Left cardiac atrium (tissue), 4 donors: ENCODE measurements at regions of chr16 and their contacts with region 1.

Region 1: DNA sequence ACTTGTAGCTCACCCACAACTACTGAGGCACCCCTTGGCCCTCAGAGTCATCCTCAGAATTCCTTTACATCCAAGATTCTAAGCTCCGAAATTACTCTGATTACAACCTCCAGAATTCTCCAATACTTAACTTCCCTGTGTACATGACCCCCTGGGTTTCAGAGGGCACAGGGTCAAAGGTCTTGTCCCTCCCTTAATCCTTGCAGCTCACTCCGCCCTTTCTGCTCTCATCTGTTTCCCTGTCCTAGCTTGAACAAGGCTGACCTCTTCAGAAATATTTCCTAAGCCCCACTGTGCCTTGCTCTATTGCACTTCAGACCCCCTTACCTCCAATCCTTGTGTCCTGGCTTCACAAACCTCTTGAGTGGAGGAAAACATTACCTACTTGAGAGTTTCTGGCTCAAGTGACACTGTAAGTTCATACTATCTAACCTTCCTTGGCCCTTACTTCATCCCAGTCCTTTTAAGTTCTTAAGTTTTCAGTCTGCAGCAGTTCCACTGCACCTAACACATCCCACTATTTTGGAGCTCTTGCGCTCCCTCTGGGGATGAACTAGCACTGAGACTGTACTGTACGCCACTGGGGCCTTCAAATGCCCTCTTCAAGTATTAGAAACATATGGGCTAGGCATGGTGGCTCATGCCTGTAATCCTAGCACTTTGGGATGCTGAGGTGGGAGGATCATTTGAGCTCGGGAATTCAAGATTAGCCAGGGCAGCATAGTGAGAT is 6.2 kb downstream of the N4BP1 start:
- DNase-seq: no peak
- ATAC-seq: no peak

Region 2: DNA sequence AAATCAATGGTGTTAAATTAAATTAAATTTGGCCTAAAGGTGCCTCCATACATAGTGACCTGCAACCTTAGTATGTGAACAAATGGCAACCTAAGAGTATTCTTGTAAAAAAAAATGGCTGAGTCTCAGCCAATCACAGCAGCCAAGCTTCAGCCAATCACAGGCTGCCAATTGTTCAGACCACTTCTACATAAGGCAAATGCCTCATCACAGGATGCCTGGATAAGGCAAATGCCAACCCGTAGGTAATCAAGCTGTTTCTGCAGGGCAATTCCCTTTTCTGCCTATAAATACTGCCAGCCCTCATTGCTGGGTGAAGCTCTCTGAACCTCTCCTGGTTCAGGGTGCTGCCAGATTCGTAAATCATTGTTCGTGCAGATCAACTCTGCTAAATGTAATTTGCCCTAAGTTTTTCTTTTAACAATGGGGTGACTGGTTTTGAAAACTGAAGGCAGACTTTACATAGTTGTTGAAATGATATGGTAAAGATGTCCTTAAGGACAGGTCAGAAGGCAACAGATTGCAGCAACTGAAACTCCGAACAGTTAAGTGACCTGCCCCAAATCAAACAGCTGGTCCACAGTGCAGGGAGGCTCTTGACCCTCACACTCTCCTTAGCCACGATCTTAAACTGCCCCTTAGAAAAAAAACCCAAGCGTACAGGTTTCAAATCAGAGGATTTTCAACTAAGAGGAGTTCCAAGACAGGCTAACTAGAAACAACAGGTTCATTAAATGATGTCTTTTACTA is 44.2 kb before region 1 on chr16:
- intact Hi-C with region 1: loop called in 1 of 2 experiments (anchors 5 kb)
- DNase-seq: no peak
- ATAC-seq: no peak